MCF 10A (cell line): ENCODE measurements at regions of chr3 and their contacts with region 1.

Region 1: GRCh38 chr3:194089357-194090177 is 46.4 kb upstream of the HES1 start:
- DNase-seq: peak; percentile 100
- H3K4me3 Mint-ChIP-seq: peak overlapping the region; percentile 57
- H3K27ac Mint-ChIP-seq: peak overlapping the region; percentile 89
- H3K4me1 Mint-ChIP-seq: peaks cover 25% of the 10 kb centered on the region
- H3K27me3 Mint-ChIP-seq: no peaks in the 10 kb centered on the region
- CTCF ChIP-seq: no peak

Region 2: DNA sequence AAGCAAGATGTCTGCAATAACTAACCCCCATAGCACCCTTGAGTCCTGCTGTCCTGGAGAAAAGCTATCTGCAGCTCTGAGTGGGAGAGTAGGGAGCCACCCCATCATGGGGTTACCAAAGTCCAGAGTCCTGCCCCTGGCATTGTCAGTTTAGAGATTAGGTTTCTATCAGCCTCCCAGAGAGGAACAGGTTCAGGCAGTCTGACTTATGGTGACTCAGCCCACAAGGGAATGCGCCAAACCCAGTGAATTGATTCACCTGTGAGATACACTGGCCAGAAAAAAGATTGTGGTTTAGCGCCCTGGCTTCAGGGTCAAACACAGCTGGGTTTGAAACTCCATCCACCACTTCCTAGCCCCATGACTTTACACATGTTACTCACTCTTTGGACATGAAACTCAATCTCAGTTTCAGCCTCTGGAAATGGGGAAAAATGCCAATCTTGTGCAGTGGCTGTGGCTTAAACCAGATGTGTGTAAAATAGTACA is 217.3 kb before region 1 on chr3:
- CTCF ChIA-PET with region 1: no interaction called
- POLR2A ChIA-PET with region 1: interaction called, 32 read pairs
- intact Hi-C with region 1: no loop called
- DNase-seq: peak; percentile 99
- H3K4me3 Mint-ChIP-seq: no peak overlapping the region
- H3K27ac Mint-ChIP-seq: peak overlapping the region; percentile 27
- H3K4me1 Mint-ChIP-seq: peaks cover 68% of the 10 kb centered on the region
- H3K27me3 Mint-ChIP-seq: peaks cover 12% of the 10 kb centered on the region
- CTCF ChIP-seq: no peak

Region 3: DNA sequence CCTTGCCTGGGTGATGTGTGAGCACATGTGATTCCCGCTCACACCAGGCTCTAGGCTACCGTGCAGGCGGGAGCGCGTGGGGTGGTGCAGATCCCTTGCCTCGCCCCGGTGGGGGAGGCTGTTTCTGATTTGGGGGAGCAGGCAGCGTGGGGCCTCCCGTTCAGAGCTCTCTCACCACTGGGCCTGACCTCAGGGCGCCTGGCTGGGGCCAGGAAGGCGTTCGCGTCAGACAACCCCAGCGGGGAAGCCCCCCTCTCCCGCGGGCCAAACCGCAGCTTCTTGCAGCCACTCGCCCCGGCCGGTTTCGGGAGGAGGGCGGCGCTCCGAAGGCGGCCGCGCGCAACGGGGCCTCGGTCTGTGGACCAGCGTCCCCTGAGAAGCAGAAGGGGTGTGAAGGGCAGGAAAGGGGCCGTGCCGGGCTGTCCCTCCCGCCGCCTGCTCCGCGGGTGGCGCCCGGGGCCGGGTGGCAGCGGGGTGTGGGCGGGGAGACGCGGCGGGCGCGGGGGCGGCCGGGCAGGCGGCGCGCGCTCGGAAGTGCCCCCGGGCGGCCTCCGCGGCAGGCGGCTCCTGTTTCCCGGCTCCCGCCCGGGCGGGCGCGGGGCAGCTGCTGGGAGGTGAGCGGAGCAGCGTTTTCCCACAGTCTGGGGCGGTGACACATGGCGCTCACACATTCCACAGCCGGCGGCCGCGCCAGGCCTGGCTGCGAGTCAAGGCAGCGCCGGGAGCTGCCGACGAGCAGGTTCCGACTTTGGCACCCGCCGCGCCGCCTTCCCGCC is 18.7 kb before region 1 on chr3:
- CTCF ChIA-PET with region 1: interaction called, 5 read pairs
- POLR2A ChIA-PET with region 1: interaction called, 39 read pairs
- intact Hi-C with region 1: loop called (anchors 2 kb)
- DNase-seq: peak; percentile 96
- H3K4me3 Mint-ChIP-seq: peak overlapping the region; percentile 67
- H3K27ac Mint-ChIP-seq: no peak overlapping the region
- H3K4me1 Mint-ChIP-seq: peaks cover 17% of the 10 kb centered on the region
- H3K27me3 Mint-ChIP-seq: no peaks in the 10 kb centered on the region
- CTCF ChIP-seq: no peak

Region 4: DNA sequence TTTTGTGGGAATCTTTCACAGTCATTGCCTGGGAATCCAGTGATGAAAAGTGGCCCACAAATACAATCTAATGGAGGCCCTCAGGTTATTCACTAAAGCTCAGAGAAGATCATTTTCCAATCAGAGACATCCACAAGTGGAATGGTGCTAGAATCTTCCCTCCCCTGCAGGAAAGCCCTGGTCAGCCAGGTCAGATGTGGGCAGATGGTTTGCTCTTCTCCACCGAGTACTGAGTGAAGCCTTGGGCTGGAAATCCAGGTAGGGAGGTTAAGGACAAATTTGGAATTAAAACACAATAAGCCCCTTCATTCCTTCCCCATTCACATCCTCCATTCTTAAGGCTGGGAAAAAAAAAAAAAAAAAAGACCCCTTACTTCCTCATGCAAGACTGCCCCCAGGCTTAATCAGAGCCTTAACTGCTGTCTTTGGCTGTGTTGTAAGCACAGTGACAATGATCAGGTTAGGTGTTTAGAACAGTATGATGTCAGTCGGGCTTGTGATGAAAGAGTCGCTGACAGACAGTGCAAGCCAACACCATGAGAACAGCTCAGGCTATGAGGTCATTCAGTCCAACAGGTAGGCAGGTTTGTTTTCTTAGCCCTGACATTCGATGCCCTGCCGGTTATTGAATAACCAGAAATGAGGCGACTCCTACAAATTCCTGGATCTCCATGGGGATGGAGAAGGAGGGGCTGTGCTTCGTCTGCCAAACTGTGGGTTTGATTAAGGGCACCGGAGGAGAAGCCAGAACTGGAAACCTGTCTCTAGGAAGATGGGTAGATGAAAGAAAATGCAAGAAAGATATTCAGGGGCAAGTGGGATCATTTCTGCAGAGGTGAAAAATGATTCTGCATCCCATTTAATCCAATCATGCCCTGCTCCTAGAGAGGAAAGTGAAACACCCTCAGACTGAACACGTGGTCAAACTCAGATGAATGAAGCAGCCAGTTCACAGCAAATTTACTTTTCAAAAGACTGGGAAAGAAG is 22.8 kb after region 1 on chr3:
- CTCF ChIA-PET with region 1: no interaction called
- POLR2A ChIA-PET with region 1: interaction called, 17 read pairs
- intact Hi-C with region 1: no loop called
- DNase-seq: peak; percentile 85
- H3K4me3 Mint-ChIP-seq: no peak overlapping the region
- H3K27ac Mint-ChIP-seq: no peak overlapping the region
- H3K4me1 Mint-ChIP-seq: peaks cover 10% of the 10 kb centered on the region
- H3K27me3 Mint-ChIP-seq: peaks cover 12% of the 10 kb centered on the region
- CTCF ChIP-seq: no peak

Region 5: GRCh38 chr3:194148383-194148782 is 58.8 kb after region 1 on chr3:
- CTCF ChIA-PET with region 1: no interaction called
- POLR2A ChIA-PET with region 1: no interaction called
- intact Hi-C with region 1: no loop called
- DNase-seq: peak; percentile 79
- H3K4me3 Mint-ChIP-seq: no peak overlapping the region
- H3K27ac Mint-ChIP-seq: no peak overlapping the region
- H3K4me1 Mint-ChIP-seq: peaks cover 20% of the 10 kb centered on the region
- H3K27me3 Mint-ChIP-seq: peaks cover 17% of the 10 kb centered on the region
- CTCF ChIP-seq: no peak

Region 6: DNA sequence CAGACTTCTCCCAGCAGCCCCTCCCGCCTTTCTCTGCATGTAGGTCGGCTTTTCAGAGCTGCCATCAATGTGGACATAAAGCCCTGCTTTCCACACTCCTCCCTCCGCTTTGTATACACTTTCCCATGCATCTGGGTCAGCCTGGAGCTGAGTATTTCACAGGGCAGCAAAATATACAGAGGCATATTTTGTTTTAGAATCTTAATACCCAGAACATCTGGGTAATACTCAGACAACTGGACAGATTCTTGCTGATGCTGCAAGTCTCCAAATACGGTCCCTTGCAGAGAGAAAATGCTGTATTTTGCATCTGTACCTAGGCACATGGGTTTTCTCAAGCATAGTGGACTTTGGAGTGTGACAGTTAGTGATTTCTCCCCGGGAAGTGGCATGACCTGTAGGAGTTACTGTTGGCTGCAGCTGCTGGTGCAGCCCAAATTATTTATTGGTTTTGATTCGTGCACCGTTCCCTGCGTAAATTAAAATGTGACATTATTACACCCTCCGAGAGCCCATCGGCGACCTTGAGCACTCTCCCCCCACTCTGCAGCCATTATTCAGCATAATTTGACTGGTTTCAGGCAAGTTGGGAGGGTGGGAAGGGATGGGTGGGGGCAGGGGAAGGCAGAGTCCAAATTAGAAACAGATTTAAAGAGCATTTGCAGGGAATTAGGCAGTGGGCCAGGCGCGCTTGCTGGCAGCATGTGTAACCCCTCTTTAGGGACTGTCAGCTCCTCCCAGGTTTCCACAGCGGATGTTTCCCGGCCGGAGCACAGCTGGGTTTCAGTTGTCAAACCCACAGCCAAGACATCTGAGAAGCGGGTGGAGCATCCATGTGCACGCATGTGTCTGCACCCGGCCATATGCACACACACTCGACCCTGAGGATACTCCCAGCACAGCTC is 160.8 kb after region 1 on chr3:
- CTCF ChIA-PET with region 1: no interaction called
- POLR2A ChIA-PET with region 1: no interaction called
- intact Hi-C with region 1: no loop called
- DNase-seq: no peak
- H3K4me3 Mint-ChIP-seq: no peak overlapping the region
- H3K27ac Mint-ChIP-seq: no peak overlapping the region
- H3K4me1 Mint-ChIP-seq: no peaks in the 10 kb centered on the region
- H3K27me3 Mint-ChIP-seq: peaks cover 21% of the 10 kb centered on the region
- CTCF ChIP-seq: no peak

Region 7: DNA sequence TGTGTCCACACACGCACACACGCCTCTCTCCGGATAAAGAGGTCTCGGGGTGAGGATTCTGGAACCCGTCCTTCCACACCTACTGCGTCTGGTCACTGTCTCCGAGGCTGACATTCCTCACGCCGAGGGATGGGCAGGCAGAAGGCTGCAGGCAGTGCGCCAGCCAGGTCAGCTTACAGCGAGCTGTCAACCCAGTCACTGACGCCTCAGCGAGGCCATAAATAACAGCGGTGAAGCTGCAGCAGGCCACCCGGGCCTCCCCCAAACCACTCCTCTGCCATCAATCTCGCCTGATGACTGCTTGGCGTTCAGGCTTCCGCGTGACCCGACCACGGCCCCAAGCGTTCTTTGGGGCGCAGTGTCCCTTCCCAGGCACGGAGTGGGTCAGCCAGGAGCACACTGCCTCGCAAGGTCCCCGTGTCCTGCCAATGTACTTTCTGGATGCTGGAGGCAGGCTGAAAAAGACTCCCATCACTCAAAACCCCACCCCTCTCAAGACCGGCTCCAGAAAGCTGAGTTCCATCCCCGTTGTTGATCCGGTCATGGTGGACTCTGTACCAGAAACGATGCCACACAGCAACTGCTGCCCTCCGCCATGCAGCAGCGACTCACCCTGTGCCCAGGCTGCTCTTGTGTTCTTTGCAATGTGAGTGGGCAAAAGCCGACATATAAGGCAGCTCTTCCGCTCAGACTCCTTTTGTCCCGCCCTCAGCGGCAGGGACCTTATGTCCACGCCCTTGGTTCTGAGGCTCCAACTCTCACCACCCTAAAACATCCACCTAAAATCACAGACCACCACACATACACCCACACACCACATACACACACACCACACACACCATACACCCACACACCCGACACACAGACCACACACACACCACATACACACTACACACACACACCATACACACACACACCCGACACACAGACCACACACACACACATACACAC is 234.5 kb after region 1 on chr3:
- CTCF ChIA-PET with region 1: no interaction called
- POLR2A ChIA-PET with region 1: interaction called, 10 read pairs
- intact Hi-C with region 1: loop called (anchors 5 kb)
- DNase-seq: peak; percentile 86
- H3K4me3 Mint-ChIP-seq: no peak overlapping the region
- H3K27ac Mint-ChIP-seq: no peak overlapping the region
- H3K4me1 Mint-ChIP-seq: no peaks in the 10 kb centered on the region
- H3K27me3 Mint-ChIP-seq: no peaks in the 10 kb centered on the region
- CTCF ChIP-seq: no peak